Panc1 (cell line): ENCODE measurements at regions of chr20 and their contacts with region 1.

Region 1: GRCh38 chr20:36460648-36461599 is 80.4 kb upstream of the MYL9 start:
- DNase-seq: peak; percentile 61
- ATAC-seq: peak; percentile 89
- H3K4me3 ChIP-seq: peak overlapping the region; percentile 60 to 94
- H3K27ac ChIP-seq: peak overlapping the region; percentile 96
- H3K4me1 ChIP-seq: peaks cover 25% of the 10 kb centered on the region
- H3K27me3 ChIP-seq: no peaks in the 10 kb centered on the region
- CTCF ChIP-seq: no peak

Region 2: DNA sequence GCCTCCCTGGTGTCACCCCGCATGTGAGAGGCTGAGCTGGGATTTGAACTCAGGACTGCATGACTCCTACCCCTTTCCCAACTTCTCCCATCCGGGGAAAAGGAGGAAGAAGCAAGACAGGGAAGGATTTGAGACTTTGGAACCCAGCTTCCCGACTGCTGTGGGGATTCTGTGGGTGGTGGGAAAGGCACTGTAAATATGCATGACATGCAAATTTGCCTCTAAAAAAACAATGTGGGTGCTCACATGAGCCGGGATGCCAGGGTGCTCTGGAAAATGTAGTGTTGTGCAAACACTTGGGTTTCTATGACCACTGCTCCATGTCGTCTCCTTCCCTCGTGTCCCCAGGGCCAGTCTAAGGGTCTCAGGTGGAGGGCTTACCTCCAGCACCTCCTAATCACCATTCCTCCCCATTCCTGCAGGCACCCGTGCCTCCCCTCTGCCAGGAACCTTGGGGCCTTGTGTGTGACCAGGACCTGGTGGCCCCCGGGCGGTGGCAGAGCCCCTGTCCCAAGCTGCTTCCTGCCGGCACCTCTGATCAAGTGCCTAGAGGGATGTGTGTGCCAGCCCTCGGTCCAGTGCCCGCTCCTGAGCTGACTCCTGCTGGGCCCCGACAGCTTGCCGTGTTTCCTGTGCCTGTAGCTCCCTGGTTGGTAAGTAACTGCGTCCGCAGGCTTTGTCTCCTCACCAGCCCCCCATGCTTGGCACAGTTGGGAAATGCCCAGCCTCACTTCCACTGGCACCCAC is 94.1 kb before region 1 on chr20:
- CTCF ChIA-PET with region 1: no interaction called
- POLR2A ChIA-PET with region 1: interaction called, 12 read pairs
- in situ Hi-C with region 1: no loop called
- intact Hi-C with region 1: no loop called
- DNase-seq: no peak
- ATAC-seq: no peak
- H3K4me3 ChIP-seq: no peak overlapping the region
- H3K27ac ChIP-seq: no peak overlapping the region
- H3K4me1 ChIP-seq: no peaks in the 10 kb centered on the region
- H3K27me3 ChIP-seq: no peaks in the 10 kb centered on the region
- CTCF ChIP-seq: no peak

Region 3: DNA sequence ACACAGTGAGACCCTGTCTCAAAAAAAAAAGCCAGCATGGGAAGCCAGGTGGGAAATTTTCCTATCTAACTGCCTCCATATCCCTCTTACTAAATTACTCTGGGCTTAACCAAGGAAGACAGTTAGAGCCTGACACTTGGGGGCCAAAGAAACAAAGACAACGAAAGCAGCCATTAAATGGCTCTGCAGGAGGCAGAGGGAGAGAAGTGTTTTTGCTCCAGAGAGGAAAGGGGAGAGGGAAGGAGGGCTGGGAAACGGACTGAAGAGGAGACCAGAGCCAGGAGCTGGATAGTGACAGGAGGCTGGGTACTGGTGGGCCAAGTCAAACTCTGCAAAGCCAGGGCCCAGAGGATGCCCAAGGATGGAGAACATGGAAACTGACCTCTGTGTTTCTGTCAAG is 101.8 kb after region 1 on chr20:
- CTCF ChIA-PET with region 1: no interaction called
- POLR2A ChIA-PET with region 1: no interaction called
- in situ Hi-C with region 1: no loop called
- intact Hi-C with region 1: no loop called
- DNase-seq: no peak
- ATAC-seq: no peak
- H3K4me3 ChIP-seq: no peak overlapping the region
- H3K27ac ChIP-seq: no peak overlapping the region
- H3K4me1 ChIP-seq: no peaks in the 10 kb centered on the region
- H3K27me3 ChIP-seq: no peaks in the 10 kb centered on the region
- CTCF ChIP-seq: no peak